ENCODE measurements at regions of chr1 and their contacts with region 1.

Region 1: DNA sequence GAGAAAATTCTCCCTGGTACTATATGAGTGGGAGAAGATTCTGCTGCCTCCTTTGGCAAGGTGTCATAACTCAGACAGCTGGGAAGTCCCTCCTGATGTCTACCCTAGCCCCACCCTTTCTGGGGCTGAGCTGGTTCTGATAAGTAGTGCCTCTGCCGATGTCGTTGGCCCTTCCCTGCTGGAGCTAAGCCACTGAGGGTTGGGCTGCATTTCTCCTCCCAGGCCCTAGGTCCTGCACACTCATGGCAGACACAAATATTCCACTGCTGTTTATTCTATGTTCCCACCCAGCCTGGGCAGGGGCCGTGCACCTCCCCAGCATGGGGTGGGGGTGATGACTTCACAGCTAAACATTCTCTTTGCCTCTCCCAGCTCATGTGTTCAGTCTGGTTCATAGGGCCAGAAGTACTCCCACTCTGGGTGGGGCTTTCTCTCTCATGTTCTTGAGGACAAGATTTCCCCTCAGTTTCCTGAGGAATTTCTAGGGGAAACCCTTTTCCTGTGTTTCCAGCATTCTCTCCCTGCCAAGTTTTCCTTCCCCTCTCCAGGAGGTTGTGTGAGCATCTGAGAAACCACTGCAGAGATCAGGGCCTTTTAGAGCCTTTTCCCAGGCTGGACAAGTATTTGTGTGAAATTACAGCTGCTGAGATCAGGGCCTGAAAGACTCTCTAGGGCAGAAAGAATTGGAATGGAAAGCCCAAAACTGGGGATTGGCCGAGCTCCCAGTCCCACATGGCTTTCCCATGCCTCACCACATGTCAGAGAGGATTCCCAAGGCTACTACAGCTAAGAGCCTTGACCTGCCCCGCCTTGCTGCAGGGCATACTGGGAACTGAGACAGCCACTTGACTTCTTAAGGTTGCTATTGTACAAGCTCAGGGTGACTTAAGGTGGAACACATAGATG is 66.2 kb downstream of the ATP2B4 start:
- DNase-seq: peak; percentile 93
- ATAC-seq: peak; percentile 87
- H3K4me3 ChIP-seq: no peak overlapping the region; the same call in 1 of the 2 replicates
- H3K27ac ChIP-seq: peak overlapping the region; percentile 99
- H3K4me1 ChIP-seq: peaks cover 26% of the 10 kb centered on the region
- H3K27me3 ChIP-seq: no peaks in the 10 kb centered on the region
- CTCF ChIP-seq: no peak

Region 2: DNA sequence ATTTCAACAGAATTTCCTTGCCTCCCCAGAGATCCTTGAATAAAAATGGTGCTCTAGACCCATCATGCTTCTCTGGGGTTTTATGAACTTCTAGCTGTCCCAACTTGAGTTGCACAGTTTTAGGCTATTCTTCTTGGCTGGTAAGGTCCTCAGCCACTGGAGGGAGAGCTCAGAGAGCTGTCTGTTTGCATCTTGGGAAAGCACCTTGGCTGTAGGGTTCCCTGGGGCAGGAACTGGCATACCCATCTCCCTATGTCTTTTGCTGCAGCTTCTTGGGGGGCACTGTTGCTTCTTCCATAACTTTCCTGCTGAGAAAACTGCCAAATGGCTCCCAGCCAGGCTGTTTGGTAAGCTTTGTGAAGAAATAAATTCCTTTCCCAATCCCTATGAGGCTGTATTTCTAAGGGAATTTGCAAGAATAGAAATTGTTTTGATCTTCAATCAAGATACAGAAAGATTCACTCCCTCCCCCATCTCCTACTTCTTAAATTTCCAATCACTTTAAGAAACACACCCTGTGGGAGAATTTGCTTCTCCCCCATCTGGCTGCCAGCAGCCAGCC is 333.7 kb before region 1 on chr1:
- CTCF ChIA-PET with region 1: no interaction called
- POLR2A ChIA-PET with region 1: no interaction called
- intact Hi-C with region 1: no loop called
- DNase-seq: no peak
- ATAC-seq: no peak
- H3K4me3 ChIP-seq: no peak overlapping the region
- H3K27ac ChIP-seq: no peak overlapping the region
- H3K4me1 ChIP-seq: no peaks in the 10 kb centered on the region
- H3K27me3 ChIP-seq: peaks cover 82% of the 10 kb centered on the region
- CTCF ChIP-seq: no peak

Region 3: DNA sequence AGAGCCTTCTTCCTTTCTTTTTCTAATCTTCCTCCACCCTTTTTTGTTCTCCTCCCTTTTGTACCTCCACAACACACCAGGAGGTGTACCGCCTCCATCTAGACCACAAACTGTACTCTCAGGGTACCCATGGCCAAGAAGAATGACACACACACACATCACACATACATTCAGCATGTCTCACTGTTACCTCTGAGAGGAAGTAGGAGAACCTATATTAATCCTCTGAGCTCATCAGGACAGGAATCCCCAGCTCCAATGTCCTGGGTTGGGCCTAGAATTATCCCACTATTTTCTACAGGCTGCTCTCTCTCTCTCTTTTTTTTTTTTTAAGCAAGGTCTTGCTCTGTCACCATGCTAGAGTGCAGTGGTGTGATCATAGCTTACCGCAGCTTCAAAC is 29.5 kb before region 1 on chr1:
- CTCF ChIA-PET with region 1: interaction called, 6 read pairs
- POLR2A ChIA-PET with region 1: interaction called, 17 read pairs
- intact Hi-C with region 1: loop called (anchors 1 kb)
- DNase-seq: peak; percentile 99
- ATAC-seq: peak; percentile 98
- H3K4me3 ChIP-seq: peak overlapping the region; percentile 31; the same call in 1 of the 2 replicates
- H3K27ac ChIP-seq: peak overlapping the region; percentile 95
- H3K4me1 ChIP-seq: peaks cover 36% of the 10 kb centered on the region
- H3K27me3 ChIP-seq: no peaks in the 10 kb centered on the region
- CTCF ChIP-seq: 0 out of 2 replicates have a peak, but pooled peaks have one; percentile 29

Region 4: DNA sequence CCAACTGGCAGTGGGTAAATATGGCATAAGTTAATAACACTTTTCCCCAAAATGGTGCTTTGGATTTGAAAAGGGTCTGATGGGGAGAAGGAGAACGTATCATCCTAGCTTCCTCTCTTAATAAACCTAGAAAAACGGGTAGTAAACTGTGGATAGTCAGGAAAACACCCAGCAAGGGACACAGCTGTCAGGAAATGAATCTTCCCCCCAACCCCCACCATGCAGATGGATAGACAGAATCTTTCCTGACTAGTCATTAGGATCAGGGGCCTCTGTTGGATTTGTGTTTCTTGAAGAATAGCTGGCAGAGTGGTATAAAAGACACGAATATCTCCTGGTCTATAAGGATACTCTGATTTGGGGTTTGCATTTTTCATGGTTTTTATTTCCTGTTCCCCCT is 49.6 kb after region 1 on chr1:
- CTCF ChIA-PET with region 1: no interaction called
- POLR2A ChIA-PET with region 1: no interaction called
- intact Hi-C with region 1: no loop called
- DNase-seq: no peak
- ATAC-seq: no peak
- H3K4me3 ChIP-seq: no peak overlapping the region
- H3K27ac ChIP-seq: no peak overlapping the region
- H3K4me1 ChIP-seq: no peaks in the 10 kb centered on the region
- H3K27me3 ChIP-seq: no peaks in the 10 kb centered on the region
- CTCF ChIP-seq: no peak

Measured in PC-3 (cell line).